ENCODE measurements at regions of chr5 and their contacts with region 1.

Region 1: DNA sequence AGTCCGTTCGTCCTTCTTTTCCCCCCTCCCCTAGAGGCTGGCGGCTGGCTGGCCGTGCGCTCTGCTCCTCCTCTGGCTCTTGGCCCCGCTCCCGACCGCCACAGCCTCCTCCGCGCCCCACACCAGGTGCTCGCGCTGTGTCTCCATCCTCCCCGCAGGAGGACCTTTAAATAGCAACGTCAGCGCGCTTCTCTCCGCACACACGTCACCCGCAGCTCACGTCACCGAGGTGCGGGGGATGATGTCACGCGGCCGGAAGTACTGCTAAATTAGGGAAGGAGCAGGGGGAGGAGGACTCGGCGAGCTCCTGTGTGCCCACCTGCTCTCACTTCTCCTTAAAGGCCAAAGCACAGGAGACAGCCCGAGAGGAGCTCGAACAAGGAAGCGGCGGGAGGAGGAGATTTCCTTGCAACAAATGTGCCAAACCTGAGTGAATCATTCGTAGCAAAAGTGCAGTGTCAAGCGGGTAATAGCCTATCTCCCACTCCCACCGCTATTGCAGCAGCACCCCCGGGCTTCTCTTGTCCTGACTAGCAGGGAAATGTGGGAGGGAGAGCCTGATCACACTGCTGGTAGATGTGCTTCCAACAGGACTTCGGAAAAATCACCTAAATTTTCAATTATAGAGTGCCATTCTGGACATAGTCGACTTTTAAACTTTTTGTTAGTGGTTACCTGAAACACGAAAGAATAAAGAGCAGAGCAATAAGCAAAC is 614 bp upstream of the HOMER1 start:
- DNase-seq: peak; percentile 94
- ATAC-seq: peak; percentile 67
- H3K4me3 ChIP-seq: peak overlapping the region; percentile 49
- H3K27ac ChIP-seq: peak overlapping the region; percentile 49
- H3K4me1 ChIP-seq: no peaks in the 10 kb centered on the region
- H3K27me3 ChIP-seq: no peaks in the 10 kb centered on the region
- CTCF ChIP-seq: no peak
- POLR2A ChIP-seq: peak; percentile 92
- RAD21 ChIP-seq: no peak

Region 2: DNA sequence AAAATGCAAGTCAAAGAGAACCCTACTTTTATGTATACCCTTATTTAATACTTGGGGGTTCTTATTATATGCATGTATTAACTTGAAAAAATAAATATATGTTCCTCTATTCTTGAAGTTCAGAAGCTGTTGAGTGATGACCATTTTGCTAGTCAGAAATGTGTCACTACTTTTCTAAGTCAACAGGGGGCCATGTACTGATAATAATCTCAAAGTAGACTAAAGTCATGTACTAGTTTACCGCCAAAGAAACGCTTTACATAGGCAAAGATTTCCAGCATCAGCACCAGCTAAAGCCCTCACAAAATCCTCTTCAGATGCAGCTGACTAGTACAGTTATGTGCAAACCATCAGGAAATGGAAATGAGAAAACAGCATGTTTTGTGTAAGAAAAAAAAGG is 408.7 kb before region 1 on chr5:
- CTCF ChIA-PET with region 1: no interaction called
- POLR2A ChIA-PET with region 1: no interaction called
- dilution Hi-C with region 1: no loop called
- in situ Hi-C with region 1: no loop called
- intact Hi-C with region 1: no loop called
- DNase-seq: no peak
- ATAC-seq: no peak
- H3K4me3 ChIP-seq: no peak overlapping the region
- H3K27ac ChIP-seq: no peak overlapping the region
- H3K4me1 ChIP-seq: no peaks in the 10 kb centered on the region
- H3K27me3 ChIP-seq: peaks cover 38% of the 10 kb centered on the region
- CTCF ChIP-seq: no peak
- POLR2A ChIP-seq: no peak
- RAD21 ChIP-seq: no peak

Region 3: DNA sequence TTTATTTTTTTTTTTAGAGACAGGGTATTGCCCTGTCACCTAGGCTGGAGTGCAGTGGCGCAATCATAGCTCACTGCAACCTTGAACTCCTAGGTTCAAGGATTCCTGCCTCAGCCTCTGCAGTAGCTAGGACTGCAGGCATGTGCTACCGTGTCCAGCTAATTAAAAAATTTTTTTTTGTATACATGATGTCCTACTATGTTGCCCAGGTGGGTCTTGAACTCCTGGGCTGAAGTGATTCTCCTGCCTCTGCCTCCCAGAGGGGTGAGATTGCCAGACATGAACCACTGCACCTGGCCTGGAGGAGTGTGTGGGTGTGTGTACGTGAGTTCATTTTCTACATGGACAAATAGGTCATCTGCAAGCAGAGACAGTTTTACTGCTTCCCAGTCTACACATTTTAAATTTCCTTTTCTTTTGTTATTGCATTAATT is 244.8 kb before region 1 on chr5:
- CTCF ChIA-PET with region 1: no interaction called
- POLR2A ChIA-PET with region 1: no interaction called
- dilution Hi-C with region 1: no loop called
- in situ Hi-C with region 1: no loop called
- intact Hi-C with region 1: no loop called
- DNase-seq: no peak
- ATAC-seq: no peak
- H3K4me3 ChIP-seq: no peak overlapping the region
- H3K27ac ChIP-seq: no peak overlapping the region
- H3K4me1 ChIP-seq: no peaks in the 10 kb centered on the region
- H3K27me3 ChIP-seq: no peaks in the 10 kb centered on the region
- CTCF ChIP-seq: no peak
- POLR2A ChIP-seq: no peak
- RAD21 ChIP-seq: no peak

Region 4: GRCh38 chr5:79448336-79448735 is 66.2 kb before region 1 on chr5:
- CTCF ChIA-PET with region 1: no interaction called
- POLR2A ChIA-PET with region 1: interaction called, 13 read pairs
- dilution Hi-C with region 1: no loop called
- in situ Hi-C with region 1: no loop called
- intact Hi-C with region 1: no loop called
- DNase-seq: peak; percentile 73
- ATAC-seq: peak; percentile 96
- H3K4me3 ChIP-seq: no peak overlapping the region
- H3K27ac ChIP-seq: no peak overlapping the region; the same call in 1 of the 2 replicates
- H3K4me1 ChIP-seq: peaks cover 2% of the 10 kb centered on the region; the same call in 1 of the 2 replicates
- H3K27me3 ChIP-seq: no peaks in the 10 kb centered on the region
- CTCF ChIP-seq: no peak
- POLR2A ChIP-seq: no peak
- RAD21 ChIP-seq: no peak

Region 5: DNA sequence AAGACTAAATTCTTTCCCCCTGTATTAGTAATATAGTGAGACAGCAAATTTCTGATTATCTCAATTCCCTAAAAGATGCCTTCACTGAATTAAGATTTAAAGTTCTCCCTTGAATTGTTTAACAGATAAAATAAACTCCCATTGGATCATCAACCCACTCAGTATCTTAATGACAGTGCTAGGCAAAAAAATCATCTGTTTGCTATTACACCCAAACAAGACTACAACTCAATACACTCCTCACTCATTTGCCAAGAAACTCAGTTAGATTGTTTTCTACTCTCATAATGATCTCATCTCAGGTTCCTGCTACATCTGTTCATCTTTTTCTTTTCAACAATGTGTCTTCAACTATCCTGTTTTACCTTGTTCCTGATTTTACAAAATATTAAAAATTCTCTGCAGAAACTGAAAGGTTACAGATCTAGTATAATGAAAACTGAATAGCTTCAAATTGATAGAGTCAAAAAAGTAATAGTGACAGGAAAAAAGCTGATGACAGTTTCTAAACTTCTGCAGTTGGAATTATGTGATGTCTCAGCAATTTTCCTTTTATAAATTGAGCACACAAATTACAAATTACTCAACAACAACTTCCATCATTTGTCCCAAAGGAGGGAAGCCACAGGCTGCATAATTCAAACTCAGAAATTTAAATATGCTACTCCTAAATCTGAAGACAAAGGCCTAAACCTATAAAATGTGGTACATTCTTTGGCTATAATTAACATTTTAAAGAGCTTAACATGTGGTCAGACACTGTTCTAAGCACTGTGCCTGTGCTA is 40.0 kb before region 1 on chr5:
- CTCF ChIA-PET with region 1: no interaction called
- POLR2A ChIA-PET with region 1: no interaction called
- dilution Hi-C with region 1: no loop called
- in situ Hi-C with region 1: no loop called
- intact Hi-C with region 1: loop called (anchors 5 kb)
- DNase-seq: peak; percentile 24
- ATAC-seq: peak; percentile 40
- H3K4me3 ChIP-seq: no peak overlapping the region
- H3K27ac ChIP-seq: no peak overlapping the region
- H3K4me1 ChIP-seq: peaks cover 4% of the 10 kb centered on the region
- H3K27me3 ChIP-seq: no peaks in the 10 kb centered on the region
- CTCF ChIP-seq: no peak
- POLR2A ChIP-seq: no peak
- RAD21 ChIP-seq: no peak

Region 6: GRCh38 chr5:79612667-79613198 is 98.2 kb after region 1 on chr5:
- CTCF ChIA-PET with region 1: no interaction called
- POLR2A ChIA-PET with region 1: no interaction called
- dilution Hi-C with region 1: no loop called
- in situ Hi-C with region 1: no loop called
- intact Hi-C with region 1: loop called (anchors 5 kb)
- DNase-seq: no peak
- ATAC-seq: no peak; the same call in 1 of the 2 replicates
- H3K4me3 ChIP-seq: peak overlapping the region; percentile 75
- H3K27ac ChIP-seq: peak overlapping the region; percentile 89
- H3K4me1 ChIP-seq: no peaks in the 10 kb centered on the region
- H3K27me3 ChIP-seq: no peaks in the 10 kb centered on the region
- CTCF ChIP-seq: no peak
- POLR2A ChIP-seq: 0 out of 2 replicates have a peak, but pooled peaks have one; percentile 15
- RAD21 ChIP-seq: no peak

Region 7: GRCh38 chr5:79837761-79838605 is 323.4 kb after region 1 on chr5:
- CTCF ChIA-PET with region 1: no interaction called
- POLR2A ChIA-PET with region 1: no interaction called
- dilution Hi-C with region 1: no loop called
- in situ Hi-C with region 1: no loop called
- intact Hi-C with region 1: no loop called
- DNase-seq: no peak
- ATAC-seq: no peak
- H3K4me3 ChIP-seq: no peak overlapping the region
- H3K27ac ChIP-seq: no peak overlapping the region
- H3K4me1 ChIP-seq: no peaks in the 10 kb centered on the region
- H3K27me3 ChIP-seq: peaks cover 3% of the 10 kb centered on the region; the same call in 1 of the 2 replicates
- CTCF ChIP-seq: no peak
- POLR2A ChIP-seq: no peak
- RAD21 ChIP-seq: no peak

Measured in IMR-90 (cell line).